PC-9 (cell line): ENCODE measurements at regions of chr2 and their contacts with region 1.

Region 1: GRCh38 chr2:234251326-234252271 is 201.1 kb downstream of the SPP2 start:
- DNase-seq: peak; percentile 81 to 99
- H3K4me3 ChIP-seq: no peak overlapping the region
- H3K27ac ChIP-seq: peak overlapping the region; percentile 91
- H3K4me1 ChIP-seq: peaks cover 80% of the 10 kb centered on the region
- H3K27me3 ChIP-seq: no peaks in the 10 kb centered on the region
- CTCF ChIP-seq: no peak

Region 2: DNA sequence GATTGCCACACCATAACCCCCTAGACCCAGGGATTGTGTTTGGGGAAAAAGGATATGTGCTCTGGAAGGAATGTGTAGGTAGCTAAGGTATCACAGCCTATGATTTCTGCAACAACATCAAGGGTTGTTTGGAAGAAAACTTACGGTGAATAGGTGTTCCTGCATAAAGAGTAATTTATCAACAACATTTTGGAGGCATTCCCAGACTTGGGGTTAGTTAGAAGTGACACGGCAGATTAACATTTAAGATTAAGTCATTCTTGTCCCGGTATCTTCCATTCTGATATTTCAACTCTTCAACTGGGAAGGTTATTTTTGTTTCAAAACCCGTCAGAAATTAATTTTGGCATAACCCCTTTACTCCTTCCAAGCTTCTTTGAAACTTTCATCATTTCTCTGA is 135.5 kb before region 1 on chr2:
- CTCF ChIA-PET with region 1: no interaction called
- POLR2A ChIA-PET with region 1: no interaction called
- intact Hi-C with region 1: no loop called
- DNase-seq: peak in 1 of 2 experiments; percentile 3
- H3K4me3 ChIP-seq: no peak overlapping the region
- H3K27ac ChIP-seq: no peak overlapping the region
- H3K4me1 ChIP-seq: peaks cover 16% of the 10 kb centered on the region
- H3K27me3 ChIP-seq: no peaks in the 10 kb centered on the region
- CTCF ChIP-seq: no peak

Region 3: GRCh38 chr2:234169187-234169570 is 82.4 kb before region 1 on chr2:
- CTCF ChIA-PET with region 1: no interaction called
- POLR2A ChIA-PET with region 1: interaction called, 3 read pairs
- intact Hi-C with region 1: loop called (anchors 2 kb)
- DNase-seq: peak; percentile 60 to 79
- H3K4me3 ChIP-seq: no peak overlapping the region
- H3K27ac ChIP-seq: no peak overlapping the region
- H3K4me1 ChIP-seq: peaks cover 31% of the 10 kb centered on the region
- H3K27me3 ChIP-seq: no peaks in the 10 kb centered on the region
- CTCF ChIP-seq: no peak

Region 4: DNA sequence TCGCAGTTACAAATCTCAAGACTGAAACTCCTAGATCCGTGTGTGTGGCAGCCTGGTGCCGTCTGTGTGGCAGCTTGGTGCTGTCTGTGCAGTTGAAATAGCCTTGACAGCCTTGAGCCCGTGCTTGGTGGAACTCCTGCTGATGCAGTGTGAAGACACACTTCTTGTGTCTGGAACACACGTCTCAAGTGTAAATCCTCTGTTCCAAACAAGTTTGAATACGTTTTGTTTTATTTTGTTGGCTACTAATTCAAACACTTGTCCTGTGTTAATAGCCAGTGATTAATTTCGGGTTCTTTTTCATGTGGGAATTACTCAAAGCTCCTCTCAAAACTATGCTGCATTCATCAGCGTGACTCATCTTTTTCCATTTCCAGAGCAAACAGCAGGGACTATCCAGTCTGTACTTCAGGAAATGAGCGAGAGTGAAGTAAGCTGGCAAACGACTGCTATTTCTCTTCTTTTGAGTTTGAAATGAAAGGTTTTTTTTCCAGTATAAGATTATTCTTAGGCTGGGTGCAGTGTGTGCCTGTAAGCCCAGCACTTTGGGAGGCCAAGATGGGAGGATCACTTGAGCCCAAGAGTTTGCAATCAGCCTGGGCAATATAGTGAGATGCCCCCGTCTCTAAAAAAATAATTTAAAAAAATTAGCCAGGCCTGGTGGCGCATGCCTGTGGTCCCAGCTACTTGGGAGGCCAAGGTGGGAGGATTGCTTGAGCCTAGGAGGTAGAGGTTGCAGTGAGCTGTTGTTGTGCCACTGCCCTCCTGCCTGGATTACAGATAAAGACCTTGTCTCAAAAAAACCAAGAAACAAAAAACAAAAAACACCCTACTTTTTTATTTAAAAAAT is 48.2 kb before region 1 on chr2:
- CTCF ChIA-PET with region 1: no interaction called
- POLR2A ChIA-PET with region 1: interaction called, 11 read pairs
- intact Hi-C with region 1: no loop called
- DNase-seq: peak; percentile 63 to 98
- H3K4me3 ChIP-seq: peak overlapping the region; percentile 1; the same call in 1 of the 2 replicates
- H3K27ac ChIP-seq: peak overlapping the region; percentile 91
- H3K4me1 ChIP-seq: peaks cover 44% of the 10 kb centered on the region
- H3K27me3 ChIP-seq: no peaks in the 10 kb centered on the region
- CTCF ChIP-seq: no peak

Region 5: DNA sequence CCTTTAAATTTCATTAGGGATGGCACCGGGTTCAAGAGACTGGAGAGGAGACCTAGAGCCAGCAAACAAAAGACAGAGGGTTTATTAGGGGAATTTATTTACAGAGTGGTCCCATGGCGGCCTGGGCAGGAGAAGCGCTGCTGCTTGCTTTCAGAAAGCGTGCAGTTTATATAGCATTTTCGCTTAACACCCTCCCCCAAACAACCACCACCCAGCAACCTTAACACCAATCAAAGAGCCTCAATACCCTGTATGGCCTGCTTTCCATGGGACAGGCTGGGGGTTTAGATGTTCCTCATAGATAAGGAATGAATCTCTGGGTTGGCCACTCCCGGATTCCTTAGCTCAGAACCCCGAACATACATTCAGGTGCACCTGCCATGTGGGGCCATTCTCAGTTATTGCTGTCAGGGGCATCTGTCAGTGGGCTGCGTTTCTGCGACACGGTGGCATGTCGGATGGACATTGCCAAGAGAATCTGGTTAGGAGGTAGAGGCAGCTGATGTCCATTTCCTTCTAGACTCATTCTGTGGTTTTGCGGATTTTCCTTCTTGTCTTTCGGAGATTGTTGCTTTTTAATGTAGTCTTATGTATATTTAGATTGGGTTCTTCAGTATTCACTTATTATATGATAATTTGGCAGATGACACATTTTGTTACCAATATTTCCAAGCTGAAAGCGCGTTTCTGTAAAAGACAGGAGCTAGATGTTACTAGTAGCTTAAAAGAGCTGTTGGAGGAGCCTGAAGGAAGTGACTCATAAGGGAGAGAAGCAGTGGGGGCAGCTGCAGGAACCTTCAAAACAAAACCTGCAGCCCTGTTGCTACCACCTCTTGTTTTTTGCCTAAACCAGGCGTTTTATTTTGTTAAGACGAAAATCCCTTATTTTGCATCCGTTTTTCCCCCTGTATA is 1249.4 kb after region 1 on chr2:
- CTCF ChIA-PET with region 1: no interaction called
- POLR2A ChIA-PET with region 1: interaction called, 12 read pairs
- intact Hi-C with region 1: no loop called
- DNase-seq: peak; percentile 48 to 76
- H3K4me3 ChIP-seq: peak overlapping the region; percentile 29; the same call in 1 of the 2 replicates
- H3K27ac ChIP-seq: peak overlapping the region; percentile 61
- H3K4me1 ChIP-seq: peaks cover 65% of the 10 kb centered on the region
- H3K27me3 ChIP-seq: no peaks in the 10 kb centered on the region
- CTCF ChIP-seq: no peak